ENCODE measurements at regions of chr11 and their contacts with region 1.

Region 1: GRCh38 chr11:71251761-71252443 is 475 bp downstream of the SHANK2 start:
- DNase-seq: peak in 4 of 10 donors; percentile 30 to 81 (median 44)

Region 2: GRCh38 chr11:71114124-71114851 is 137.6 kb before region 1 on chr11:
- intact Hi-C with region 1: loop called (anchors 10 kb)
- DNase-seq: peak in 5 of 10 donors; percentile 11 to 70 (median 47)

Region 3: GRCh38 chr11:71372693-71373657 is 121.1 kb after region 1 on chr11:
- intact Hi-C with region 1: loop called (anchors 10 kb)
- DNase-seq: peak in 1 of 10 donors; percentile 31